ENCODE measurements at regions of chr6 and their contacts with region 1.

Region 1: GRCh38 chr6:28586962-28587745 is 61.5 kb downstream of the GPX5 start:
- DNase-seq: peak; percentile 85
- ATAC-seq: peak; percentile 98
- H3K4me3 ChIP-seq: peak overlapping the region; percentile 89
- H3K27ac ChIP-seq: peak overlapping the region; percentile 33
- H3K4me1 ChIP-seq: peaks cover 24% of the 10 kb centered on the region
- H3K27me3 ChIP-seq: no peaks in the 10 kb centered on the region
- CTCF ChIP-seq: no peak

Region 2: DNA sequence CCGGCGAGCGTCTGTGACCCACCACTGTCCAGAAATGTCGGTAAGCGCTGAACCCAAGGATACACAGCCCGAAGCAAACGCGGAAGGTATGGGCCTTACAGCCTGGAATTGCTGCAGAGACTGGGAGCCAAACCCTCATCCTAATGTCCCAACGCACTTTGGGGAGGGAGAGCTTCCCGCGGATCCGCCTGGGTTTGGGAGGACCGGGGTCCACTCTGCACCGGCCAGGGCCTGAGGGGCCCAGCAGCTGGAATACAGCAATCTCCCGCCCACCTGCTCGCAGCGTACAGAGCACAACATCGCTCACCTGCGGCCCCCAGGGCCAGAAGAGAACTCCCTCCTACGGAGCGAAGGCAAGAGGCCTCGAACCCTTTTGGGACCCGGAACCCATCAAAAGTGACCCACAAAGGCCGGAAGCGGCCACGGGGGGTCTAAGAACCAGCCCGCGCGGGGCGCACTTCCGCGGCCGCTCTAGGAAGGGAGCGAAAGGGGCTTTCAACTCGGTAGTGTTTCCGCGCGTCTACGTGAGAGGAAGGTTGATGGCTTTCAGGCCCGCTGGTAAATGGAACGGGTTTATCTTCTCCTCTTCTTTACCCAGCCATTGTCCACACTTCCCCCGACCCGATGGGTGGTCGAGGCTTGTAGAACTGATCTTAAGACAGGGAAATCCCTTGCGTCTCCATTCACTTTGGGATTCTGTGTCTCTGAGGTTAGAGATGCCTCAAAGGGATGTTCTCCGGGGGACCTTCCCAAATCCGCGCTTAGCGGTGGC is 187.6 kb before region 1 on chr6 and contains the start of gene ZSCAN12:
- CTCF ChIA-PET with region 1: no interaction called
- POLR2A ChIA-PET with region 1: no interaction called
- intact Hi-C with region 1: loop called (anchors 10 kb)
- DNase-seq: no peak
- ATAC-seq: no peak
- H3K4me3 ChIP-seq: no peak within 1 kb of the TSS
- H3K27ac ChIP-seq: no peak within 1 kb of the TSS
- H3K4me1 ChIP-seq: peaks cover 7% of the 10 kb centered on the region
- H3K27me3 ChIP-seq: no peaks in the 10 kb centered on the region
- CTCF ChIP-seq: no peak
- total RNA-seq, gene ZSCAN12: 0.58 and 0.95 TPM in 2 replicates

Region 3: DNA sequence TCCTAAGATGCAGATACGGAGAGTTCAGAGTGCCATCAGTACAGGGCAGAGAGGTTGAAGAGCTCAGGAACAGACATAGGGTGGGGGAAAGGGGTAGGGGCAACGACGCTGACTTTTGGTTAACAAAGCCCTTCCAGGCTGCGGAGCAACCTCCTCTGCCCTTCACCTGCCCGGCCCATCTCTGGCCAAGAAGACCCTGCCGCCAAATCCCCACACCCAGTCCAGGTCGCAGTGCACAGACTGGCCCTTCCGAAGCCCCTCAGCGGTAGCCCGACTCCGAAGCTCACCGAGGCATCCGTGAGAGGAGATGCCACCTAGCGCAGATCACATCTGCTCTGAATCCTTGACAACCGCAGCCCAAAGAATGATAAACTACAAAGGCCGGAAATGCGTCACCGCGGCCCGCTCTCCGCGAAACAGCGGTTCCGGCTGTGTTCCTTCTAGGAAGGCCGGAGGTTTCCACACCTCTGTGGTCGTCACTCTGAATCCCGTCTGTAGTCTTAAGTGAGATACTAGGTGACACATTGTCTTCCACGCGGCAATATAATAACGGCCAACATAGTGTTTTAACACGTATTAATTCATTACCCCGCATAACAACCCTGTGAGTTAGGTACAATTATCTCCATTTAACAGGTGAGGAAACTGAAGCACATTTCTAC is 143.9 kb before region 1 on chr6 and contains the start of gene ZSCAN23:
- CTCF ChIA-PET with region 1: no interaction called
- POLR2A ChIA-PET with region 1: no interaction called
- intact Hi-C with region 1: loop called (anchors 5 kb)
- DNase-seq: peak; percentile 91
- ATAC-seq: peak; percentile 98
- H3K4me3 ChIP-seq: peak within 1 kb of the TSS; percentile 88
- H3K27ac ChIP-seq: no peak within 1 kb of the TSS
- H3K4me1 ChIP-seq: peaks cover 9% of the 10 kb centered on the region; the same call in 1 of the 2 replicates
- H3K27me3 ChIP-seq: no peaks in the 10 kb centered on the region
- CTCF ChIP-seq: no peak; the same call in 1 of the 2 replicates
- total RNA-seq, gene ZSCAN23: 2.2 and 3.4 TPM in 2 replicates